ENCODE measurements at regions of chr1 and their contacts with region 1.

Region 1: DNA sequence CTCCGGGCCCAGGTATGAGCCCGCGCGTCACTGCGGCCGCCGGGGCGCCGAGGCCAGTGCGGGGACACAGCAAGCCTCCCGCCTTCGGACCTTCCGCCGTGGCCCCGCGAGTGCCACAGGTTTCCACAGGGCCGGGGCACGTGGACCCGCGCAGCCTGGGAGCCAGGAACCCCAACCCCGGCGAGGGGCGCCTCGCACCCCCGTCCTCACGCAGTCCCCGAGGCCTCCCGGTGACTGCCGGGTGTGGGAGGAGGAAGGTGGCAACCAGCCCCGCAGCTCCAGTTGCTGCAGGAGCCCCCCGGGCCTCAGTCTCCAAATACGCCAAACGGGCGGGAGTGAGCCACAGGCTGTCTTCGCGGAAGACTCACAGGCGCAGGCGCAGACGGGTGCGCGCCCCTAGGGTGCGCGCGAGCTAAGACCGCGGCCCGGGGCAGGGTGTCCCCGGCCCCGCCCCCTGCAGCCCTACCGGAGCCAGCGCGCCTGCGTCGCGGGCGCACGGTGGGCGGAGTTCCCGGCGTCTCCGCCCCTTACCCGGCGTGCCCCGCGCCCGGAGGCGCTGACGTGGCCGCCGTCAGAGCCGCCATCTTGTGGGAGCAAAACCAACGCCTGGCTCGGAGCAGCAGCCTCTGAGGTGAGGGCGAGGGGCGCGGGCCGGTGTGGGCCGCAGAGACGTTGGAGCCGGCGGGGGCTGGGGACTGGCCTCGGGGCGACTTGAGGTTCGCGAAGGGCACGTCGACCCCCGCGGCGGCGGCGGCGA is at the start of gene ARF1:
- DNase-seq: peak; percentile 70 to 93
- H3K4me3 ChIP-seq: peak within 1 kb of the TSS; percentile 97 to 100
- H3K27ac ChIP-seq: peak within 1 kb of the TSS; percentile 99 to 100
- H3K4me1 ChIP-seq: peaks cover 29 to 35% of the 10 kb centered on the region in 2 donors
- H3K27me3 ChIP-seq: no peaks in the 10 kb centered on the region
- CTCF ChIP-seq: no peak
- total RNA-seq, gene ARF1: 447 TPM

Region 2: GRCh38 chr1:227563324-227564201 is 518.8 kb before region 1 on chr1 and contains the start of gene ZNF678:
- intact Hi-C with region 1: loop called (anchors 5 kb)
- DNase-seq: peak; percentile 78 to 95
- H3K4me3 ChIP-seq: peak within 1 kb of the TSS; percentile 65 to 71
- H3K27ac ChIP-seq: peak within 1 kb of the TSS; percentile 68 to 80
- H3K4me1 ChIP-seq: peaks cover 0 to 6% of the 10 kb centered on the region in 2 donors
- H3K27me3 ChIP-seq: no peaks in the 10 kb centered on the region
- CTCF ChIP-seq: no peak
- total RNA-seq, gene ZNF678: 0.75 TPM

Region 3: GRCh38 chr1:227734856-227735538 is 347.3 kb before region 1 on chr1 and contains the starts of genes JMJD4 and SNAP47:
- intact Hi-C with region 1: loop called (anchors 5 kb)
- DNase-seq: peak in 1 of 2 donors; percentile 95
- H3K4me3 ChIP-seq: peak within 1 kb of the TSS; percentile 81 to 93
- H3K27ac ChIP-seq: peak within 1 kb of the TSS; percentile 84 to 88
- H3K4me1 ChIP-seq: peaks cover 0 to 9% of the 10 kb centered on the region in 2 donors
- H3K27me3 ChIP-seq: no peaks in the 10 kb centered on the region
- CTCF ChIP-seq: no peak
- total RNA-seq, gene JMJD4: 10.6 TPM
- total RNA-seq, gene SNAP47: 54.0 TPM

Region 4: DNA sequence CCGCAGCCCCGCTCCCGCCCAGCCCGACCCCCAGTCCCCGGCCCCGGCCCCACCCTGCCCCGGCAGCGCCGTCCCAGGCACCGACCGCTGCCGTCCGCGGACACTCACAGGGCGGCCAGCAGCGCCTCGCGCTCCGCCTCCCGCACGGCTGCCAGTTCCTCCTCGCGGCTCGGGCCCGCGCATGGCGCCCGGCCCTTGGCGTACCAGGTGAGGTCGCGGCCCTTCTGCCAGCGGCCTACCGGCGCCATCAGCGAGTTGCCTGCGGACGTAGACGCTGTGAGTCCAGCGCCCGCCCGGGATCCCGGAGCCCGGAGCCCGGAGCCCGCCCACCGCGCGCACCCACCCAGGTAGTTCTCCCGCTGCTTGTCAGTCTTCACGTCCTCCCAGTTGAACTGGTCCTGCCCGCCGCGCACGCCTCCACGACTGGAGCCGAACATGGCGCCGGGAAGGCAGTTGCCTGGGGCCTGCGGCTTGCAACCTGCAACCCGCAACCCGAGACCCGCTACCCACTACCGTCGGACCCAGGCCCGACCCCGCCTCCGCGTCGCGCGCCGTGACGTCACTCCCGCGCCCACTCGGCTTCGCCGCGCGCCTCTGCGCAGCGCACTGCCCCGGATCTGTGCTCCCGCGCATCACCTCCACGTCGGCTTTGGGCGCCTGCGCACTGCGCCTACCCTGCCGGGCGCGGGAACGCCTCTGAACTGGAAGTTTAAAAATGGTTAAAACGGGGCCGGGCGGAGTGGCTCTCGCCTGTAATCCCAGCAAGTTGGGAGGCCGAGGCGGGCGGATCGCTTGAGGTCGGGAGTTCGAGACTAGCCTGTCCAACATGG is 20.7 kb after region 1 on chr1 and contains the start of gene C1orf35:
- intact Hi-C with region 1: loop called (anchors 1 kb)
- DNase-seq: peak; percentile 67 to 96
- H3K4me3 ChIP-seq: peak within 1 kb of the TSS; percentile 89 to 99
- H3K27ac ChIP-seq: peak within 1 kb of the TSS; percentile 95
- H3K4me1 ChIP-seq: peaks cover 6 to 19% of the 10 kb centered on the region in 2 donors
- H3K27me3 ChIP-seq: no peaks in the 10 kb centered on the region
- CTCF ChIP-seq: no peak
- total RNA-seq, gene C1orf35: 2.4 TPM

Region 5: DNA sequence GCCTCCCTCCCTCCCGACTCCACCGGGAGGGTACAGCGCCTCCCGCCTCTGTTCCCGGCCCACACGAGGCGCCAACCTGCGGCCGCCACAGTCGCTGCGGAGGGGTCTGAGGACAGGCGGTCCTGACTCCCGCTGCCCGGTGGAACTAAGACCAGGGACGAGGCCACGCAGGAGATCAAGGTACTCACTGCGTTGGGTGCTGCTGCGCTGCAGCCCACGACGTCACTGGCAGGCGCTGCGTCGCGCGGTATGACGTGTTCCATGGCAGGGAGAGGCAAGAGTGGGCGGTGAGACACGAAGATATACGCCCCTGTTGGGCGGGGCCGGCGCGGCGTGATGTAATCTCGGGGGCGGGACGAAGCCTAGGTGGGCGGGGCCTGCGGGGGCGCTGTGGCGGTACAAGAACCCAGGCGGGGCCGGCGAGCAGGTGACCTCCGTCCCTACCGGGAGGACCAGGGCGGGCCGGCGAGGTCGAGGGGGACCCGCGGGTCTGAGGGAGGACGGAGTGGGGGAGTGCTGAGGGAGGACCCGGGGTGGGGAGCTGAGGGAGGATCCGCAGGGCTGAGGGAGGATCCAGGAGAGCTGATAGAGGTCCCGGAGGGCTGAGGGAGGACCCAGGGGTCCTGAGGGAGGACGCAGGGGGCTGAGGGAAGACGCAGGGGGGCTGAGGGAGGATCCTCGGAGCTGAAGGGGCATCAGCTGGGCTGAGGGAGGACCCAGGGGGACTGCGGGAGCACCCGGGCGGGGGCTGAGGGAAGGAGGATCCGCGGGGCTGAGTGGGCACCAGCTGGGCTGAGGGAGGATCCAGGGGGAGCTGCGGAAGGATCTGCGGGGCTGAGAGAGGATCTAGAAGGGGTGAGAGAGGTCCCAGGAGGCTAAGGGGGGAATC is 27.0 kb after region 1 on chr1 and contains the start of gene MRPL55:
- intact Hi-C with region 1: loop called (anchors 1 kb)
- DNase-seq: peak; percentile 94 to 99
- H3K4me3 ChIP-seq: peak within 1 kb of the TSS; percentile 77 to 97
- H3K27ac ChIP-seq: peak within 1 kb of the TSS; percentile 88 to 89
- H3K4me1 ChIP-seq: peaks cover 14 to 18% of the 10 kb centered on the region in 2 donors
- H3K27me3 ChIP-seq: no peaks in the 10 kb centered on the region
- CTCF ChIP-seq: peak in 1 of 3 experiments; percentile 9
- total RNA-seq, gene MRPL55: 23.6 TPM

Region 6: GRCh38 chr1:228139944-228140656 is 57.8 kb after region 1 on chr1 and contains the start of gene GUK1:
- intact Hi-C with region 1: loop called (anchors 1 kb)
- DNase-seq: peak; percentile 100
- H3K4me3 ChIP-seq: peak within 1 kb of the TSS; percentile 79 to 92
- H3K27ac ChIP-seq: peak within 1 kb of the TSS; percentile 90 to 96
- H3K4me1 ChIP-seq: peaks cover 18 to 34% of the 10 kb centered on the region in 2 donors
- H3K27me3 ChIP-seq: no peaks in the 10 kb centered on the region
- CTCF ChIP-seq: peak in 1 of 3 experiments; percentile 17
- total RNA-seq, gene GUK1: 979 TPM

Region 7: DNA sequence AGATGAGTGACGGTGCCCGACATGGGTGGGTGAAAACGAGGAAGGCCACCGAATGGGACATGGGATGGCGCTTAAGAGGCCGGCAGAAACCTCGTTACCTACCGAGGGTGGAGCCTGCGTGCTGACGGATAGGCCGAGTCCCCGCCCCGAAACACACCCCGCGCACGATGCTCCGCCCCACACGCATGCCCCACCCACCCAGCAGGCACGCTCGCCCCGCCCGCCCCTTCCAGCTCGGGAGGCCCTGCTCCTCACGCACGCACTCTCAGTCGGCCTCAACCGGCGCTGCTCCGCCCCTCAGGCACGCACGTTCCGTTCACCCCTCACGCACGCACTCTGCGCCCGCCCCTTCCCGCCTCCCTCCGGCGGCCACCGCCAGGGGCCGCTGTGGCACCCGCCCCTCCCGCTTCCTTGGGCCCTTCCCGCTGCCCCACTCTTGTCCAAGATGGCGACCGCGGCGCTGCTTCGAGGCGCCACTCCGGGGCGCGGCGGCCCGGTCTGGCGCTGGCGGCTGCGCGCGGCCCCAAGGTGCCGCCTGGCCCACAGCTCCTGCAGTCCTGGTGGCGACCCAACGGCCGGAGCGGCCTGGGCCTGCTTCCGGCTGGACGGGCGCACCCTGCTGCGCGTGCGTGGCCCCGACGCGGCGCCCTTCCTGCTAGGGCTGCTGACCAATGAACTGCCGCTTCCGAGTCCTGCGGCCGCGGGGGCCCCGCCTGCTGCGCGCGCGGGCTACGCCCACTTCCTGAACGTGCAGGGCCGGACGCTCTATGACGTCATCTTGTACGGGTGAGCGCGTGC is 83.3 kb after region 1 on chr1 and contains the start of gene IBA57:
- intact Hi-C with region 1: loop called (anchors 1 kb)
- DNase-seq: peak; percentile 96 to 99
- H3K4me3 ChIP-seq: peak within 1 kb of the TSS; percentile 80 to 91
- H3K27ac ChIP-seq: peak within 1 kb of the TSS; percentile 94 to 98
- H3K4me1 ChIP-seq: peaks cover 0 to 11% of the 10 kb centered on the region in 2 donors
- H3K27me3 ChIP-seq: no peaks in the 10 kb centered on the region
- CTCF ChIP-seq: peak; percentile 84 to 97 (median 87)
- total RNA-seq, gene IBA57: 55.6 TPM